ENCODE measurements at regions of chr5 and their contacts with region 1.

Region 1: GRCh38 chr5:149605998-149606724 is 24.9 kb downstream of the ARHGEF37 start:
- DNase-seq: peak; percentile 61
- H3K4me3 Mint-ChIP-seq: peak overlapping the region; percentile 57
- H3K27ac Mint-ChIP-seq: peak overlapping the region; percentile 79
- H3K4me1 Mint-ChIP-seq: peaks cover 26% of the 10 kb centered on the region
- H3K27me3 Mint-ChIP-seq: no peaks in the 10 kb centered on the region

Region 2: DNA sequence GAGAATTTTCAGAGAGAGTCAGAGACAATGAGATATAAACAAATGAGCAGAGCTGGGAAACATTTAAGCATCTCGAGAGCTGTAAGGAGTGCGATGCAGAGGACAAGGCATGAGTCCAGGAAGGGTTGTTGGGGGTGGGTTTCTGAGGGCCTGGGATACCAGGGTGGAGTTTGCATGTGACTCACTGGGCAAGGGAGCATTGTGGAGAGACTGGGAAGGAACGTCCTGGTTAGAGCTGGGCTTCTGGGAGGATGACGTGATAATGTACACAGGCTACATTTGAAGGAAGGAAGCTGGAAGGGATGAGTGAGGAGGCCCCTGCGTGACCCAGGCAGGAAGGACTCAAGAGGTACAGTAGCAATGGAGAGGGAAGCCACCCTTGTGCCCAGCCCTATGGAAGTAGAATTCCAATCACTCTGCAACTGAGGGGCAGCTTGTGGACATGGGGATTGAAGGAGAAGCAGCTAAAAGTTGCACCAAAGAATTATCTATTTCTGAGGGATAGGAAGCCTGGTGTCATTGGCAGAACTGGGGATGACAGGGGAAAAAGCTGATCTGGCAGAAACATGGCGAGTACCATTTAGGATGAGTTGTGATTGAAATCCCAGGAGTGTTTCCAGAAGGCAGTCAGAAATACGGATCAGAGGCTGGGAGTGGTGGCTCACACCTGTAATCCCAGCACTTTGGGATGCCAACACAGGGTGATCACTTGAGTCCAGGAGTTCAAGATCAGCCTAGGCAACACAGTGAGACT is 393.8 kb before region 1 on chr5:
- CTCF ChIA-PET with region 1: no interaction called
- POLR2A ChIA-PET with region 1: no interaction called
- DNase-seq: no peak
- H3K4me3 Mint-ChIP-seq: no peak overlapping the region
- H3K27ac Mint-ChIP-seq: no peak overlapping the region
- H3K4me1 Mint-ChIP-seq: no peaks in the 10 kb centered on the region
- H3K27me3 Mint-ChIP-seq: no peaks in the 10 kb centered on the region

Region 3: DNA sequence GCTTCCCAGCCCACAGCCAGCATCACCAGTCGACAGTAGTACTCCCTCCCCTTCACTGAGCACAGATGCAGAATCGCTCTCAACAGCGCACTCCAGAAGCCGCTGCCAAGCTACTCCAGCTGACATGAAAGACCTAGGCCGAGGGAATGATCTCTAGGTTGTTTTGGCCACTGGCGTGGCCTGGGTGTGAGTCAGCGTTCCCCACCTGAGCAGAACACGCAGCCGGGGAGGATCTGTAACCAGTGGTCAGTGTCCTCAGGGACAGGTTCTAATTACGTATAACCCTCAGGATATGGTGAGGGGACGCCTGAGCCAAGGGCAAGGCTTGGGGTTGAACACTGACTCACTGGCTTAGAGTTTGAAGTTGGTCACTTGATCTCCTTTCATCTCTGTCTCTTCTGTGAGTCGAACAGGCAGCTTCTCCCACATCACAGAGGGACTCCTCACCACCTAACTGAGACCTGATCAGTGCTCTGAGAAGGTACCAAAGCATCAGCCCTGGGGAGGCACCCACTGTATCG is 150.2 kb before region 1 on chr5:
- CTCF ChIA-PET with region 1: no interaction called
- POLR2A ChIA-PET with region 1: no interaction called
- DNase-seq: no peak
- H3K4me3 Mint-ChIP-seq: no peak overlapping the region
- H3K27ac Mint-ChIP-seq: no peak overlapping the region
- H3K4me1 Mint-ChIP-seq: peaks cover 4% of the 10 kb centered on the region
- H3K27me3 Mint-ChIP-seq: peaks cover 6% of the 10 kb centered on the region

Region 4: DNA sequence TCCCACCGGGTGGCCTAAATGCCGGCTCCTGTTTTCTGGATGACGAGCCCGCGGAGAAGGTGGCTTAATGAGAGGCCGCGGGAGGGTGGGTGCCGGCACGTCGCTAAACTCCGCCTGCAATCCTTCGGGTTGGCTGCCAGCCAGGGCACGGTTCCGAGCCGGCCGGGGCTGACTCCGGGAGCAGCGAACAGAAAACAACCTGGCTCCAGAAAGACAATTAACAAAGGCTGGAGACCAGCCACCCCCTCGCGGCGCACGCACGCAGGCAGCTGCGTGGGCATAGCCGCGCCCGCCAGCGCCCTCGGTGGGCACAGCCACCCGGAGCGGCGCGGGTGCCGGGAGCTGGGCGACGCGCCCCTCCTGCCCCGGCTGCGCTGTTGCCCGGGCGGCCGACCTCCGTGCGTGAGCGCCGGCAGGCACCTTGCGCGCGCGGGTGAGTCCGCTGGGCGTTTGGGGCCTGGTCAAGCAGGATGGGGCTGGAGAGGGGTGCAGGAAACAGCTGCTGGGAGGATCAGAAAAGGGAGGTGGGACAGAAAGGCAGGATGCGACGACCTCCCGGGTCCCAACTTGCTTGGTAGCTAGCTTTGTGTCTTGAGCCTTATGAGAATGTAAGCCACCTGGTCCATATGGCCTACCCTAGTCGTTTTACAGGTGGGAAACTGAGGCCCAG is 24.8 kb before region 1 on chr5 and contains the start of gene ARHGEF37:
- CTCF ChIA-PET with region 1: interaction called, 5 read pairs
- POLR2A ChIA-PET with region 1: interaction called, 10 read pairs
- DNase-seq: peak; percentile 41
- H3K4me3 Mint-ChIP-seq: peak within 1 kb of the TSS; percentile 71
- H3K27ac Mint-ChIP-seq: no peak within 1 kb of the TSS
- H3K4me1 Mint-ChIP-seq: peaks cover 18% of the 10 kb centered on the region
- H3K27me3 Mint-ChIP-seq: peaks cover 14% of the 10 kb centered on the region
- total RNA-seq, gene ARHGEF37: 0.88 to 1.1 TPM

Measured in activated CD4-positive, alpha-beta memory T cell treated with anti-CD3 and anti-CD28 coated beads, Interleukin-2, amount 10 ng/mL, durations not matched to agents 7 days and 5 days (primary cell).